Panc1 (cell line): ENCODE measurements at regions of chr14 and their contacts with region 1.

Region 1: DNA sequence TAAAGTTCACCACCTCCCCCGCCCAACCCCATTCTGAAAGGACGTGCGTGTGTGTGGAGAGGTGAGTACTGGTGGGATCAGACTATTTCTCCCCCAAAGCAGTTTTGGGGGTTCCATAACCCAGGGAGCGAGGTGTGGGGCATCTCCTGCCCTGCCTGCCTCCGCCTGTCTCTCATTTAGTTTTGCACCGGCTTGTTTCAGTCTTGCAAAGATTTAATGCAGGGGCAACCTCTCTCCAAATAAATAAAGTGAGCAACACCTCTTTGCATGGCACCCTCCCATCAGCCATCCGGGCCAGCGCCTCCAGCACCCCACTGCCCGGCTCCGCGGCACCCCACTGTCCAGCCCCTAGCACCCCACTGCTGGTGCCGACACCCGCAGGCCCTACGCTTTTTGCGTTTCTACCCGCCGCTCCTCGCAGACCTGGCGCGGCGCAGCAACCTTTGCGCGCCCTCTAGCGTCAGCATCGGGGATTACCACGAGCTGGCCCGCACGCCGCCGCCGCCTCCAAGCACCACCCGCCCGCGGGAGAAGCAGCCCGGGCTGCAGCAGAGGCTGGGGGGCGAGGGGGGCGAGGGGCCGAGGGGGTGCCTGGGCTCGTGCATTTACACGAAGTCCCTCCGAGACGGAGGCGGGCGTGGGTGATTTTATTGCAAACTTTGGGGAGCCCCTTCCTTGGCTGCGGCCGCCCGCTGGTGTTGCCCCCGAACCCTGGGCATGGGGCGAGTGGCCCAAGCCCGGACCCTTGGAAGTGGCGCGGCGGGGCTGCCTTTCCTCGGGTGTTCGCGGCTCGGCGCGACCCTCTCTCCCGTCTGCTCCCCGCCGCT is 55.8 kb upstream of the VRK1 start:
- DNase-seq: no peak
- ATAC-seq: peak; percentile 89
- H3K4me3 ChIP-seq: peak overlapping the region; percentile 30 to 35
- H3K27ac ChIP-seq: no peak overlapping the region
- H3K4me1 ChIP-seq: peaks cover 3% of the 10 kb centered on the region; the same call in 1 of the 2 replicates
- H3K27me3 ChIP-seq: peaks cover 15% of the 10 kb centered on the region
- CTCF ChIP-seq: peak; percentile 92

Region 2: GRCh38 chr14:96554315-96554910 is 187.0 kb before region 1 on chr14:
- CTCF ChIA-PET with region 1: interaction called, 14 read pairs
- POLR2A ChIA-PET with region 1: no interaction called
- in situ Hi-C with region 1: no loop called
- intact Hi-C with region 1: no loop called
- DNase-seq: no peak
- ATAC-seq: no peak
- H3K4me3 ChIP-seq: no peak overlapping the region
- H3K27ac ChIP-seq: no peak overlapping the region
- H3K4me1 ChIP-seq: no peaks in the 10 kb centered on the region
- H3K27me3 ChIP-seq: no peaks in the 10 kb centered on the region
- CTCF ChIP-seq: no peak

Region 3: GRCh38 chr14:96567289-96567899 is 174.0 kb before region 1 on chr14:
- CTCF ChIA-PET with region 1: interaction called, 4 read pairs
- POLR2A ChIA-PET with region 1: no interaction called
- in situ Hi-C with region 1: no loop called
- intact Hi-C with region 1: loop called (anchors 5 kb)
- DNase-seq: no peak
- ATAC-seq: peak; percentile 70; the same call in 1 of the 2 replicates
- H3K4me3 ChIP-seq: no peak overlapping the region
- H3K27ac ChIP-seq: no peak overlapping the region
- H3K4me1 ChIP-seq: no peaks in the 10 kb centered on the region
- H3K27me3 ChIP-seq: no peaks in the 10 kb centered on the region
- CTCF ChIP-seq: peak; percentile 60; the same call in 1 of the 2 replicates

Region 4: GRCh38 chr14:96584199-96584906 is 157.0 kb before region 1 on chr14:
- CTCF ChIA-PET with region 1: interaction called, 4 read pairs
- POLR2A ChIA-PET with region 1: no interaction called
- in situ Hi-C with region 1: no loop called
- intact Hi-C with region 1: loop called (anchors 1 kb)
- DNase-seq: peak; percentile 13
- ATAC-seq: peak; percentile 91
- H3K4me3 ChIP-seq: no peak overlapping the region
- H3K27ac ChIP-seq: no peak overlapping the region
- H3K4me1 ChIP-seq: no peaks in the 10 kb centered on the region
- H3K27me3 ChIP-seq: no peaks in the 10 kb centered on the region
- CTCF ChIP-seq: peak; percentile 74

Region 5: GRCh38 chr14:96710060-96710666 is 31.2 kb before region 1 on chr14:
- CTCF ChIA-PET with region 1: no interaction called
- POLR2A ChIA-PET with region 1: interaction called, 13 read pairs
- in situ Hi-C with region 1: no loop called
- intact Hi-C with region 1: no loop called
- DNase-seq: no peak
- ATAC-seq: no peak
- H3K4me3 ChIP-seq: no peak overlapping the region
- H3K27ac ChIP-seq: no peak overlapping the region
- H3K4me1 ChIP-seq: no peaks in the 10 kb centered on the region
- H3K27me3 ChIP-seq: no peaks in the 10 kb centered on the region
- CTCF ChIP-seq: no peak